ENCODE measurements at regions of chr5 and their contacts with region 1.

Region 1: DNA sequence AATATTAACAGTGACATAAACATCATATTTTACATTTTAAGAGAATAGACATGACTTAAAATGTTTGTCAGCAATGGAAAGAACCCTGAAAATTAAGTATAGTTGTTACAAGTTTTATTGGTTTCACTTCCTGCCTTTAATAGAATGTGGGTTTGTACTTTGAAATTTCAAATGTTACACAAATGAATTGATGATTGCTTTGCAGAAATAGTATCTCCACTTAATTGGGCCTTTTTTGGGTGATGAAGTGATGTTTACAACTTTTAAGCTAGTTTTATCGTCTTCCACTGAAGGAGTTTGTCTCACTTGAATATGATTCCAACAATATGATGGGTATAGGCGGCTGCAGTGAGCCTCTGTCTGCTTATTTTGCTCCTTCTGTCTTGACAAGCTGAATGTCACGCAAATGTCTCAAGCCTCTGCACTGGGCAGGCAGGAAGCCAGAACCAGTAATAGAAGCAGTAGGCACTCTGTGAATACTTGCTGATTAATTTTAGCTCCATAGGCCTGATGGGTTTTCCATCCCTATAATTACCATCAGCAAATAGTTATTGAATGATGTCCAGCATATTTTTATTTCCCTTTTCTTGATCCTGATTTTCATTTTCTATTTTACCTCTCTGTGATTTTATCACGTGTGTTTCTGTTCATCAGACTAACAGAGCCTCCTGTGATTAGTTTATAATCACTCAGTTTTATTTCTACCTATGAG is 10.6 kb upstream of the NR3C1 start:
- DNase-seq: no peak
- CTCF ChIP-seq: no peak

Region 2: DNA sequence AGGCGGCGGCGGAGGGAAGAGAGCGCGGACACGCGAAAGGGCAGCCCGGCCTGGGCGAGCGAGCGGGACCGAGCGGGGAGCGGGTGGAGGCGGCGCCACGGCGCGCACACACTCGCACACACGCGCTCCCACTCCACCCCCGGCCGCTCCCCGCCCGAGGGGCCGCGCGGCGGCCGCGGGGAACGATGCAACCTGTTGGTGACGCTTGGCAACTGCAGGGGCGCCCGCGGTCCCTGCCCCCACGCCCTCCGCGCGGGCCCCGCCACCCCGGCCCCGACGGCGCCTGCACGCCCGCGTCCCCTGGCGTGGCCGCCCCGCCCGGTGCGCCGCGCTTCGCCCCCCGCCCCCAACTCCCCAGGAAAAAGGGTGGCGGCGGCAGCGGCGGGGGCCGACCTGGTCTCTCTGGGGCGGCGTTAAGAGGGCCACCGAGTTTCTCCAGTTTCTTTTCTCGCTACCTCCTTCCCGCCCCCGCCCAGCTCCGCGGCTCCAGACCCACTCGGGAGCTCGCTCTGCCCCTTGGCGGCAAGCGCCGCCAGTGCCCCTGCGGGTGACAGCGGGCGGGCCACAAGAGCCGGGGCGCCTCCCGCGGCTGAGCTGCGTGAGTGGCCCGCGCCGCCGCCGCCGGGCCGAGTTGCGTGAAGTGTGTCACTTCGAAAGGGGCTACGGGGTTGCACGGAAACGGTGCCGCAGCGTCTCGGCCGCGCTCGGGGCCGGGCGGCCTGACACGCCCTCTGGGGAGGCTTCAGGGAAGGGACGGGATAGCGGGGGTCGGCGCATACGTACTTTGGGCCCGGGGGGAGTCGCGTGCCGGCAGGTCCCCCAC is 10.3 kb before region 1 on chr5 and contains the start of gene NR3C1:
- CTCF ChIA-PET with region 1: interaction called, 17 read pairs
- POLR2A ChIA-PET with region 1: interaction called, 3 read pairs
- DNase-seq: peak; percentile 82
- CTCF ChIP-seq: peak; percentile 63

Measured in GM10248 (cell line).